ENCODE measurements at regions of chr1 and their contacts with region 1.

Region 1: DNA sequence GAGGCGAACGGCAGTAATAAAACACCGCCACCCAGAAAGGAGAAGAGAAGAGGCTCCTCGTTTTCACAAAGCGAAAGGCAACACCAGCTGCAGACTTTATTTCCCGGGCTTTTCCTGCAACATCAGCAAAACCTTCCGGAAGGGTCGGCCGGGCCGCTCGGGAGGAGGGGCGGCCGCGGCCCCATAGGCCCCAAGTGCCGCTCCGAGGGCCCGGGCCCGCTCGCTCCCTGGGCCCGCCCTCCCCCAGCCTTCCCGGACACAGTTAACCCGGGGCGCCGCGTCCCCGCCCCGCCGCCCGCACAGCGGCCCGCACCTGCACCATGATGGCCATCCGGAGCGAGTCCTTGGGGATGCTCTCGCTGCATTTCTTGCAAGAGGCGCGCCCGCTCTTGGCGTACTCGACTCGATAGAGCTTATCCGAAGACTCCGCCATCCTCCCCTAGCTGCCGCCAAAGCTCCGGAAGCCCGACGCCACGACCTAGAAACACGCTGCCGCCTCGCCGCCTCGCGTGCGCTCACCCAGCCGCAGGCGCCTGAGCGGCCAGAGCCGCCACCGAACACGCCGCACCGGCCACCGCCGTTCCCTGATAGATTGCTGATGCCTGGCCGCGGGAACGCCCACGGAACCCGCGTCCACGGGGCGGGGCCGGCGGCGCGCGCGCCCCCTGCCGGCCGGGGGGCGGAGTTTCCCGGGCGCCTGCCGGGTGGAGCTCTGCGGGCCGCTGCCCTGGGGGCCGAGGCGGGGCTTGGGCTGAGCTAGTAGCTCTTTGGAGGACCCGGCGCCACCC is at the start of gene PARP1:
- DNase-seq: peak; percentile 93
- ATAC-seq: peak; percentile 94
- H3K4me3 Mint-ChIP-seq: peak within 1 kb of the TSS; percentile 88
- H3K27ac Mint-ChIP-seq: peak within 1 kb of the TSS; percentile 94
- H3K4me1 Mint-ChIP-seq: peaks cover 42% of the 10 kb centered on the region
- H3K27me3 Mint-ChIP-seq: no peaks in the 10 kb centered on the region
- total RNA-seq, gene PARP1: 237 to 242 TPM

Region 2: GRCh38 chr1:226186124-226187018 is 221.3 kb before region 1 on chr1 and contains the start of gene ACBD3:
- CTCF ChIA-PET with region 1: interaction called, 4 read pairs
- POLR2A ChIA-PET with region 1: no interaction called
- intact Hi-C with region 1: loop called in 1 of 2 experiments (anchors 5 kb)
- DNase-seq: peak; percentile 91
- ATAC-seq: peak; percentile 97
- H3K4me3 Mint-ChIP-seq: peak within 1 kb of the TSS; percentile 91
- H3K27ac Mint-ChIP-seq: peak within 1 kb of the TSS; percentile 92
- H3K4me1 Mint-ChIP-seq: peaks cover 36% of the 10 kb centered on the region
- H3K27me3 Mint-ChIP-seq: no peaks in the 10 kb centered on the region
- total RNA-seq, gene ACBD3: 17.0 to 20.2 TPM

Region 3: GRCh38 chr1:226424228-226425003 is 16.7 kb after region 1 on chr1:
- CTCF ChIA-PET with region 1: interaction called, 18 read pairs
- POLR2A ChIA-PET with region 1: interaction called, 7 read pairs
- intact Hi-C with region 1: loop called in 1 of 2 experiments (anchors 1 kb)
- DNase-seq: peak; percentile 28
- ATAC-seq: peak; percentile 66
- H3K4me3 Mint-ChIP-seq: no peak overlapping the region
- H3K27ac Mint-ChIP-seq: no peak overlapping the region
- H3K4me1 Mint-ChIP-seq: peaks cover 22% of the 10 kb centered on the region
- H3K27me3 Mint-ChIP-seq: no peaks in the 10 kb centered on the region

Region 4: GRCh38 chr1:226457307-226457712 is 49.6 kb after region 1 on chr1:
- CTCF ChIA-PET with region 1: interaction called, 10 read pairs
- POLR2A ChIA-PET with region 1: no interaction called
- intact Hi-C with region 1: no loop called
- DNase-seq: peak; percentile 79
- ATAC-seq: peak; percentile 93
- H3K4me3 Mint-ChIP-seq: peak overlapping the region; percentile 55
- H3K27ac Mint-ChIP-seq: peak overlapping the region; percentile 76
- H3K4me1 Mint-ChIP-seq: peaks cover 12% of the 10 kb centered on the region
- H3K27me3 Mint-ChIP-seq: no peaks in the 10 kb centered on the region

Region 5: GRCh38 chr1:226940029-226940805 is 532.5 kb after region 1 on chr1 and contains the start of gene COQ8A:
- CTCF ChIA-PET with region 1: no interaction called
- POLR2A ChIA-PET with region 1: no interaction called
- intact Hi-C with region 1: loop called in 1 of 2 experiments (anchors 1 kb)
- DNase-seq: peak; percentile 100
- ATAC-seq: peak; percentile 97
- H3K4me3 Mint-ChIP-seq: peak within 1 kb of the TSS; percentile 82
- H3K27ac Mint-ChIP-seq: peak within 1 kb of the TSS; percentile 96
- H3K4me1 Mint-ChIP-seq: peaks cover 53% of the 10 kb centered on the region
- H3K27me3 Mint-ChIP-seq: no peaks in the 10 kb centered on the region
- total RNA-seq, gene COQ8A: 21.3 to 26.9 TPM